ENCODE measurements at regions of chr11 and their contacts with region 1.

Region 1: DNA sequence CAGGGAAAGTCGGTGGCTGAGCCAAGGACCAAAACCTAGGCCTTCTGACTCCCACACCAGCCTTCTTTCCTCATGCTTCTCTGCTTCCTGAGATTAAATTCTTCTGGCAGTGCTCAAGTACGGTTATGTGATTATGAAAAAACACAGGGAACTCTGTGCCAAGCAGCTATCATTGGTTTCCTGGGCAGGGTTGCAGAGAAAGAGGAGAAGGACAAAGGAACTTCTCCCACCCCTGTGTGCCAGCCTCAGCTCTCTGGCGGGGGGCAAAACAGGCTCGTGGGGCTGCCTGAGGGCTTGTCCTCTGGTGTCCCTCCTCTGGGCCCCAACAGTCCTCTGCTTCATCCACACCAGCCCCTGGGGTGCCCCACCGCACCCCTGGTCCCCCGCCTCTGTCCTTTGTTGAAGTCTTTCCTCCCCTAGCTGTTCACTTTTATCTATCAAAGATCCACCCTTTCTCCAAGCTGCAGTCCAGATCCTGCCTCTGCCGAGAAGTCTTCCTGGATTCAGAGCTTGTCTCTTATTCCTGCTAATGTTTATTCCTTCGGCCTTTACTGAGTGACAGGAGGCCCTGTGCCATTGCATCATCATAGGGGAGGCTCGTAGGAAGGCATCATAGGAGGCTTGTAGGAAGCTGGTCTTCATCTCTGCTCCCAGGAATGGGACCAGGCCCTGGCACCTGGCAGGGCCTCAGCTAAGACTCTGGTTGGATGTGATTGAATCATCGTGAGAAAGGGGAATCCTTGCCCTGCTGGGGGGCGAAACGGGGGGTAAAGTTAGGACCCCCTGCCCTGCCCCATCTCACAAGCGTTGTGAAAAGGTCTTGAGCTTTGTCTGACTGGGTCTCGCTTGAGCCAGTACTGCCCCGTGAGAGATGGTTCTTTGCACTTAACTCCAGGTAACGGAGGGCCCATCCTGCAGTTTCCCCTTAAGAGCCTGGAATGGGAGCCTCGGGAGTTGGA is 11.5 kb upstream of the FTH1 start:
- DNase-seq: no peak
- ATAC-seq: peak; percentile 55 to 72 (median 64)
- H3K4me3 ChIP-seq: no peak overlapping the region
- H3K27ac ChIP-seq: peak overlapping the region; percentile 57 to 91 (median 80)
- H3K4me1 ChIP-seq: peaks cover 0 to 59% (median 35%) of the 10 kb centered on the region in 12 donors
- H3K27me3 ChIP-seq: no peaks in the 10 kb centered on the region
- CTCF ChIP-seq: no peak
- POLR2A ChIP-seq: no peak

Region 2: GRCh38 chr11:61695917-61696316 is 283.1 kb before region 1 on chr11:
- intact Hi-C with region 1: no loop called
- DNase-seq: peak; percentile 79 to 88 (median 83)
- ATAC-seq: peak; percentile 56 to 82 (median 76)
- H3K4me3 ChIP-seq: peak overlapping the region in 9 of 12 donors; percentile 9 to 42 (median 31)
- H3K27ac ChIP-seq: peak overlapping the region; percentile 50 to 87 (median 77)
- H3K4me1 ChIP-seq: peaks cover 10 to 85% (median 73%) of the 10 kb centered on the region in 12 donors
- H3K27me3 ChIP-seq: no peaks in the 10 kb centered on the region
- CTCF ChIP-seq: peak in 3 of 12 donors; percentile 21 to 30 (median 28)
- POLR2A ChIP-seq: no peak

Region 3: DNA sequence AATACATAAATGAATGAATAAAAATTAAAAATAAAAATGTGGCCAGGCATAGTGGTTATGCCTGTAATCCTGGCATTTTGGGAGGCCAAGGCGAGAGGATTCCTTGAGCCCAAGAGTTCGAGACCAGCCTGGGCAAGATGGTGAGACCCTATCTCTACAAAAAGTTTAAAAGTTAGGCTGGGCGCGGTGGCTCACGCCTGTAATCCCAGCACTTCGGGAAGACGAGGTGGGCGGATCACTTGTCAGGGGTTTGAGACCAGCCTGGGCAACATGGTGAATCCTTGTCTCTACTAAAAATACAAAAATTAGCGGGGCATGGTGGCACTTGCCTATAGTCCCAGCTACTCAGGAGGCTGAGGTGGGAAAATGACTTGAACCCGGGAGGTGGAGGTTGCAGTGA is 38.5 kb before region 1 on chr11:
- intact Hi-C with region 1: no loop called
- DNase-seq: no peak
- ATAC-seq: no peak
- H3K4me3 ChIP-seq: no peak overlapping the region
- H3K27ac ChIP-seq: no peak overlapping the region
- H3K4me1 ChIP-seq: no peaks in the 10 kb centered on the region
- H3K27me3 ChIP-seq: no peaks in the 10 kb centered on the region
- CTCF ChIP-seq: no peak
- POLR2A ChIP-seq: no peak

Region 4: GRCh38 chr11:62018981-62019664 is 40.1 kb after region 1 on chr11:
- intact Hi-C with region 1: loop called in 2 of 10 experiments (anchors 5 to 10 kb)
- DNase-seq: no peak
- ATAC-seq: no peak
- H3K4me3 ChIP-seq: no peak overlapping the region
- H3K27ac ChIP-seq: peak overlapping the region in 1 of 12 donors; percentile 65
- H3K4me1 ChIP-seq: peaks cover 0 to 24% (median 0%) of the 10 kb centered on the region in 12 donors
- H3K27me3 ChIP-seq: no peaks in the 10 kb centered on the region
- CTCF ChIP-seq: no peak
- POLR2A ChIP-seq: no peak

Region 5: DNA sequence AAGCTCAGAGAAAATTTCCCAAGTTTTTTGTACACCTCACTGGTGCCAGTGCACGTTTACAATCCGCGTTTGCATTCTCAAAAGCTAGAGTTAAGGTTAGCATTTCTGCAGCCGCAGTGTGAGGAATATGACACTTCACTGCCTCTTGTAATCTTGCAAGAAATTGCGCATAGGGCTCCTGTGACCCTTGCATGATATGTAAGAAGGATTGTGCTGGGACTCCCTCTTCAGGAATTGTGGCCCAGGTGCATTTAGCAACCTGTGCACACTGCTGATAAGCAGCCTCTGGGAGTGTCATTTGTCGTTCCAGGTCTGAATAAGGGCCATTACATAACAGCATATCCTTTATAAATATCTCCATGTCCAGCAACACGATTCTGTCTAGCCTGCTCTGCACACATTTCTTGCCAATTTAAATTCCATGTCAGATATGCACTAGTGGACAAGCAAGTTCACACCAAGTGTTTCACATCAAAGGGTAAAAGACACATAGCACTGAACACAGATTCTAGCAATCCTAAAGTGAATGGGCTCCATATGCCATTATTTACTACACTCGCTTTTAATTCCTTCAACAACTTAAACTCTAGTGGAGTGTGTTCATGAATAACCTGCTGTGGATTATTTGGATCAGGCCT is 75.6 kb after region 1 on chr11:
- intact Hi-C with region 1: loop called in 1 of 10 experiments (anchors 5 kb)
- DNase-seq: no peak
- ATAC-seq: no peak
- H3K4me3 ChIP-seq: no peak overlapping the region
- H3K27ac ChIP-seq: no peak overlapping the region
- H3K4me1 ChIP-seq: peaks cover 0 to 10% (median 3%) of the 10 kb centered on the region in 12 donors
- H3K27me3 ChIP-seq: no peaks in the 10 kb centered on the region
- CTCF ChIP-seq: peak; percentile 9 to 38 (median 26)
- POLR2A ChIP-seq: no peak

Region 6: DNA sequence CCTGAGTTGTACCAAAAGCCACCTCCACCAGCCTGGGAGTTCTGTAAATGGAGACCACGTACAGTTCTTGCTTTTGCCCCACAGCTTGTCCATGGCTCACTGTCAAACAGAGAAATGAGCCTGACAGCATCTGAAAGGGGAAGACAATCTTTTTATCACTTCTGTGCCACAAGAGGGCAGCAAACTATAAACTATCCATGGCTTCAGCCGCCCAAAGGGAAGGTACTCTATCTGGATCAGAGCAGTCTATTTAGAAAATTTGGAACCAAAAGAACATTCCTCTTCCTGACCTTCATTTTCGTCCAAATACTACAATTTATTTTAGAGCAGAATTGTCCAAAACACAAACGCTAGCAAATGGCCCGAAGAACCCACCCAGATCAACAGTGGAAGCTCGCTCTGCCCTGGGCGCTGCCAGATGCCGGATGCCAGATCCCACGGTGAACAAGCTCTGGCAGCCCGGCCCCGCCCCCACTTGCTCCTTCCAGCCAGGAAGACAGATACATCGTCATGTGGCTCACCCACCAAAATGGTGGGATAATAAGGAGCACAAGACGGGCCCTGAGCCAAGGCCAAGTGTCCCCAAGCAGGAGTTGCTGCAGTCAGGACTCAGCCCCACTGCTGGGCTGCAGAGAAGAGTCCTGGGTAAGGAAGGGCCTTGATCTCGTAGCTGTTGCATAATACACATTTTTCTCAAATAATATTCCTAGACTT is 416.0 kb after region 1 on chr11:
- intact Hi-C with region 1: no loop called
- DNase-seq: peak; percentile 78 to 88 (median 83)
- ATAC-seq: peak; percentile 71 to 84 (median 82)
- H3K4me3 ChIP-seq: peak overlapping the region in 11 of 12 donors; percentile 21 to 60 (median 45)
- H3K27ac ChIP-seq: peak overlapping the region in 11 of 12 donors; percentile 10 to 82 (median 67)
- H3K4me1 ChIP-seq: peaks cover 6 to 50% (median 36%) of the 10 kb centered on the region in 12 donors
- H3K27me3 ChIP-seq: no peaks in the 10 kb centered on the region
- CTCF ChIP-seq: peak; percentile 59 to 85 (median 74)
- POLR2A ChIP-seq: no peak

Measured in heart left ventricle (tissue), 16 donors.